Activated B cell treated with CpG ODN at 0.5 μM for 24 hours (primary cell): ENCODE measurements at regions of chr20 and their contacts with region 1.

Region 1: GRCh38 chr20:53939572-53940359 is 130.6 kb downstream of the BCAS1 start:
- DNase-seq: peak; percentile 50
- ATAC-seq: peak; percentile 68
- H3K4me3 Mint-ChIP-seq: peak overlapping the region; percentile 62
- H3K27ac Mint-ChIP-seq: peak overlapping the region; percentile 82
- H3K4me1 Mint-ChIP-seq: peaks cover 88% of the 10 kb centered on the region
- H3K27me3 Mint-ChIP-seq: no peaks in the 10 kb centered on the region
- CTCF ChIP-seq: no peak

Region 2: GRCh38 chr20:52312132-52312729 is 1627.5 kb before region 1 on chr20:
- CTCF ChIA-PET with region 1: interaction called, 6 read pairs
- POLR2A ChIA-PET with region 1: no interaction called
- intact Hi-C with region 1: loop called (anchors 2 kb)
- DNase-seq: no peak
- ATAC-seq: no peak
- H3K4me3 Mint-ChIP-seq: no peak overlapping the region
- H3K27ac Mint-ChIP-seq: no peak overlapping the region
- H3K4me1 Mint-ChIP-seq: no peaks in the 10 kb centered on the region
- H3K27me3 Mint-ChIP-seq: peaks cover 25% of the 10 kb centered on the region
- CTCF ChIP-seq: no peak

Region 3: GRCh38 chr20:53216856-53217576 is 722.8 kb before region 1 on chr20:
- CTCF ChIA-PET with region 1: no interaction called
- POLR2A ChIA-PET with region 1: no interaction called
- intact Hi-C with region 1: loop called (anchors 10 kb)
- DNase-seq: peak; percentile 67
- ATAC-seq: peak; percentile 78
- H3K4me3 Mint-ChIP-seq: peak overlapping the region; percentile 41
- H3K27ac Mint-ChIP-seq: no peak overlapping the region
- H3K4me1 Mint-ChIP-seq: peaks cover 12% of the 10 kb centered on the region
- H3K27me3 Mint-ChIP-seq: peaks cover 12% of the 10 kb centered on the region
- CTCF ChIP-seq: peak; percentile 61

Region 4: GRCh38 chr20:53660078-53660909 is 279.5 kb before region 1 on chr20:
- CTCF ChIA-PET with region 1: interaction called, 3 read pairs
- POLR2A ChIA-PET with region 1: no interaction called
- intact Hi-C with region 1: loop called (anchors 5 kb)
- DNase-seq: no peak
- ATAC-seq: peak; percentile 31
- H3K4me3 Mint-ChIP-seq: peak overlapping the region; percentile 87
- H3K27ac Mint-ChIP-seq: peak overlapping the region; percentile 90
- H3K4me1 Mint-ChIP-seq: peaks cover 66% of the 10 kb centered on the region
- H3K27me3 Mint-ChIP-seq: no peaks in the 10 kb centered on the region
- CTCF ChIP-seq: no peak

Region 5: DNA sequence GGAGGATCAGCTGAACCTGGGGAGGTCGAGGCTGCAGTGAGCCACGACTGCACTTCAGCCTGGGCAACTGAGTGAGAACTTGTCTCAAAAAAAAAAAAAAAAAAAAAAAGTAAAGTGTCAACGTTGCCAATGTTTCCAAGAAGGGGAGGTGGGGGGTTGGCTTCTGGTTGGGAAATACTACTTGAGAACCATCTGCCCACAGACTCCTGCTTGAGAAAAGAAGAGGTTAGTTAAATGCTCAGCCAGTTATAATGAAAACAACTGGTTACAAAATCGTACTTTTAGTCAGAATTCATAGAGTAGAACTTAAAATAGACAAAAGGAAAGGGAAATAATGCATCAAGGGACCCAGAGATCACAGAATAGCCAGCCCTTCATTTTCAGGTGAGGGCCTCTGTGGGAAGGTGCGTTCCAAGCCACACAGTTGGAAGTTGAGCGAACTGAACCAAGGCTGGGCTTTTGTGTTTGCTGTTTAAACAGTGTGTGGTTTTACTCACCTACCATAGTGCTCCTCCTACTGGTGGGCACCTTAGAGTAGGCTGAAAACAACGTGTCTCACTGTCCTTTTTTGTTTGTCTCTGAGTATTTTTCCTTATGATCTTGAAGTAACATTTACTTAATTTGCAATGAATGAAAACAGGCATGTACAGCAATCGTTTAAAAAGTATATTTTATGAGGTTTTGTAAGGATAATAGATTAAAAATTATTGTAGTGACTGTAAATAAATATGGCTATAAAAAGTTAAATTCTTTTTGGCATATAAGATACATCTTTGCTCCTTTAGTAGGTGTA is 70.1 kb before region 1 on chr20:
- CTCF ChIA-PET with region 1: interaction called, 28 read pairs
- POLR2A ChIA-PET with region 1: interaction called, 8 read pairs
- intact Hi-C with region 1: loop called (anchors 1 kb)
- DNase-seq: peak; percentile 27
- ATAC-seq: peak; percentile 80
- H3K4me3 Mint-ChIP-seq: peak overlapping the region; percentile 60
- H3K27ac Mint-ChIP-seq: peak overlapping the region; percentile 85
- H3K4me1 Mint-ChIP-seq: peaks cover 71% of the 10 kb centered on the region
- H3K27me3 Mint-ChIP-seq: no peaks in the 10 kb centered on the region
- CTCF ChIP-seq: no peak

Region 6: DNA sequence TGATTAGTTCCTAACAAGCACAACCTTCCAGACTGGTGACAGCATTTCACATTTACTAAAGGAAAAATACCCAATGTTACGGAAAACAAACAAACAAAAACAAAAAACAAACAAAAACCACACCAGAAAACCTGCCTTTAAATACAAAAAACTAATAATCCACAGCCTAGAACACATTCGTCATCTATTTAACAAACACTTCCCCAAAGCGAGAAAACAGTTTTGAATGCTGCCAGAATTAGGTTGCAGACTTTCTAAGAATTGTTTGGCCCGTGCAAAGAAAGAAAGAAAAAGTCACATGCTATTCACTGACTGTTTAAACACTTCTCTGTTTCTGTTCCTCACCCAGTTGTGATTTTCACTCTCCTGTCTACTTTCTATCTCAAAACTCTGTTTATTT is 78.0 kb after region 1 on chr20:
- CTCF ChIA-PET with region 1: no interaction called
- POLR2A ChIA-PET with region 1: no interaction called
- intact Hi-C with region 1: loop called (anchors 10 kb)
- DNase-seq: no peak
- ATAC-seq: peak; percentile 45
- H3K4me3 Mint-ChIP-seq: peak overlapping the region; percentile 21
- H3K27ac Mint-ChIP-seq: peak overlapping the region; percentile 4
- H3K4me1 Mint-ChIP-seq: peaks cover 26% of the 10 kb centered on the region
- H3K27me3 Mint-ChIP-seq: no peaks in the 10 kb centered on the region
- CTCF ChIP-seq: no peak

Region 7: GRCh38 chr20:54199721-54200176 is 260.0 kb after region 1 on chr20:
- CTCF ChIA-PET with region 1: no interaction called
- POLR2A ChIA-PET with region 1: no interaction called
- intact Hi-C with region 1: loop called (anchors 5 kb)
- DNase-seq: peak; percentile 61
- ATAC-seq: peak; percentile 66
- H3K4me3 Mint-ChIP-seq: no peak overlapping the region
- H3K27ac Mint-ChIP-seq: no peak overlapping the region
- H3K4me1 Mint-ChIP-seq: peaks cover 6% of the 10 kb centered on the region
- H3K27me3 Mint-ChIP-seq: peaks cover 2% of the 10 kb centered on the region
- CTCF ChIP-seq: peak; percentile 83